ENCODE measurements at regions of chr14 and their contacts with region 1.

Region 1: GRCh38 chr14:61837336-61838229 is 75.4 kb downstream of the SNAPC1 start:
- DNase-seq: peak; percentile 39 to 86
- H3K4me3 ChIP-seq: no peak overlapping the region
- H3K27ac ChIP-seq: no peak overlapping the region
- H3K4me1 ChIP-seq: peaks cover 0 to 4% (median 2%) of the 10 kb centered on the region in 4 experiments; a peak in 4 of 7 replicates
- H3K27me3 ChIP-seq: no peaks in the 10 kb centered on the region; a peak in 1 of 7 replicates
- CTCF ChIP-seq: peak; percentile 91 to 96 (median 93)
- EP300 ChIP-seq: no peak
- POLR2A ChIP-seq: no peak
- RAD21 ChIP-seq: peak; percentile 97 to 98

Region 2: DNA sequence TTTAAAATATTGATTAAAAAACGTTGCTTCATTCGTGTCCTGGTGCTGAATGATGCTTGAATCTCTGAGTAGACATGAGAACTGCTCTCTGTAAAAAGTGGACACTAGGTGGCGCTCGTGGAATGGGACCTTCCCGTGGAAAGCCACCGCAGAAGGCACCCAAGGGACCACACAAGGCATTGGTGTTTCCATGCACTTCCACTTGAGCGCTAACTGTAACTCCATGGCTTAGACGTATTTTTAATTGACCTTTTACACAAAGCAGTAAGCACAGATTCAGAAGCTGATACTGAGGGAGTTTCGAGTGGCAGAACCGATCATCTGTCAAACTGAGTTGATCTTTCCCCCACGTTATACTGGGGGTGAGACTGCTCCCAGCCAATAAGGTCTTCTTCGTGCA is 380.9 kb before region 1 on chr14:
- CTCF ChIA-PET with region 1: interaction called, 40 read pairs
- POLR2A ChIA-PET with region 1: interaction called, 4 read pairs
- DNase-seq: peak in 1 of 2 experiments; percentile 85
- H3K4me3 ChIP-seq: no peak overlapping the region
- H3K27ac ChIP-seq: no peak overlapping the region
- H3K4me1 ChIP-seq: no peaks in the 10 kb centered on the region
- H3K27me3 ChIP-seq: no peaks in the 10 kb centered on the region
- CTCF ChIP-seq: peak; percentile 57 to 82 (median 71)
- EP300 ChIP-seq: no peak
- POLR2A ChIP-seq: no peak
- RAD21 ChIP-seq: peak; percentile 79 to 84

Region 3: GRCh38 chr14:61475316-61475715 is 362.3 kb before region 1 on chr14:
- CTCF ChIA-PET with region 1: interaction called, 29 read pairs
- POLR2A ChIA-PET with region 1: no interaction called
- DNase-seq: no peak
- H3K4me3 ChIP-seq: no peak overlapping the region
- H3K27ac ChIP-seq: no peak overlapping the region
- H3K4me1 ChIP-seq: peaks cover 0 to 10% (median 7%) of the 10 kb centered on the region in 4 experiments; a peak in 5 of 7 replicates
- H3K27me3 ChIP-seq: no peaks in the 10 kb centered on the region
- CTCF ChIP-seq: peak in 2 of 3 experiments; percentile 26 to 55; a peak in 2 of 4 replicates
- EP300 ChIP-seq: no peak
- POLR2A ChIP-seq: no peak
- RAD21 ChIP-seq: peak; percentile 63 to 71

Region 4: DNA sequence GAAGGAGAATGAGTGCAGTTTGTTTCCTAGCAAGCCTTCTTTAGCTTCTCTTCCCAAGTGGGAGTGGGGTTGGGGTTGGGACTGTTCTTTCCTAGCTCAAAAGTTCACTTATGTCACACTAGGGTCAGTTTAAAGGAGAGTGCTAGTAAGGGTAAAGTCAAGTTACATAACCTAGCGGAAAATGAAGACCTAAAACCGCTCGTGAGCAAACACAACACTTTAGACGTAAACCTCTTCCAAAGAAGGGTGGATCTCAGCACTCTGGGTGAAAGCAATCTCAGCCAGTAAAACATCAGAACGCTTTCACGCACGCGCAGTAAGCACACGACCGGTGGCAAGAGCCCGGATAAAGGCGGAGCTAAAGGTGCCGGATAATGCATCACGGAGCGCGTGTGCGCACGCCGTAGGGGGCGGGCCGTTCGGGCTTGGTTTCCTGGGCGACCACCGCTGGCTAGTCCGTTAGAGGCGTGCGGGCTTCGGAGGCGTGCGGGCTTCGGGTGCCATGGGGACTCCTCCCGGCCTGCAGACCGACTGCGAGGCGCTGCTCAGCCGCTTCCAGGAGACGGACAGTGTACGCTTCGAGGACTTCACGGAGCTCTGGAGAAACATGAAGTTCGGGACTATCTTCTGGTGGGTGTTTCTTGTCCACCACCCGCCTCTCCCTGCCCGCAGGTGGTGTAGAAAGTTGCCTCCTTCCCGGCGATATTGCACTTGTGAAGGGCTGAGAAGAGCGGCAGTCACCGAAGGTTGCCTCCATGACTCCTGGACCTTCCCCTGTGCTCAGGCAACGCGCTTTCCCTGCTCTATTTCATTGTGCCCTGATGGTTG is 75.4 kb before region 1 on chr14 and contains the start of gene SNAPC1:
- CTCF ChIA-PET with region 1: interaction called, 12 read pairs
- POLR2A ChIA-PET with region 1: no interaction called
- DNase-seq: peak; percentile 95 to 97
- H3K4me3 ChIP-seq: peak within 1 kb of the TSS; percentile 94 to 97 (median 96)
- H3K27ac ChIP-seq: peak within 1 kb of the TSS; percentile 83
- H3K4me1 ChIP-seq: peaks cover 0 to 9% (median 4%) of the 10 kb centered on the region in 4 experiments; a peak in 4 of 7 replicates
- H3K27me3 ChIP-seq: no peaks in the 10 kb centered on the region
- CTCF ChIP-seq: no peak
- EP300 ChIP-seq: no peak
- POLR2A ChIP-seq: peak; percentile 78 to 95
- RAD21 ChIP-seq: no peak
- total RNA-seq, gene SNAPC1: 9.6 and 11.1 TPM in 2 replicates

Region 5: DNA sequence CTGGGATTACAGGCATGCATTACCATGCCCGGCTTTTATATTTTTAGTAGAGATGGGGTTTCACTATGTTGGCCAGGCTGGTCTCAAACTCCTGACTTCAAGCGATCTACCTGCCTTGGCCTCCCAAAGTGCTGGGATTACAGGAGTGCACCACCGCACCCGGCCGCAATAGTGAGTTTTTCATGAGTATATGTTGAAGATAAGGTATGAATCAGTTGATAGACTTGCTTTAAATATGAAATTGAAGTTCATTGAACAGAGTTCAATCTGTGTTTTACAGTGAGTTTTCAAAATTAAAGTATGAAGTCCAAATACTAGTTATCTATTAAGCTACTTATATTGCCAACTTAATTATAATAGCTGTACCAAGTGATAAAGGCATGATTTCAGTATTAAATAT is 40.3 kb before region 1 on chr14:
- CTCF ChIA-PET with region 1: interaction called, 14 read pairs
- POLR2A ChIA-PET with region 1: no interaction called
- DNase-seq: no peak
- H3K4me3 ChIP-seq: no peak overlapping the region
- H3K27ac ChIP-seq: no peak overlapping the region
- H3K4me1 ChIP-seq: no peaks in the 10 kb centered on the region; a peak in 1 of 7 replicates
- H3K27me3 ChIP-seq: no peaks in the 10 kb centered on the region
- CTCF ChIP-seq: no peak
- EP300 ChIP-seq: no peak
- POLR2A ChIP-seq: no peak
- RAD21 ChIP-seq: no peak

Region 6: DNA sequence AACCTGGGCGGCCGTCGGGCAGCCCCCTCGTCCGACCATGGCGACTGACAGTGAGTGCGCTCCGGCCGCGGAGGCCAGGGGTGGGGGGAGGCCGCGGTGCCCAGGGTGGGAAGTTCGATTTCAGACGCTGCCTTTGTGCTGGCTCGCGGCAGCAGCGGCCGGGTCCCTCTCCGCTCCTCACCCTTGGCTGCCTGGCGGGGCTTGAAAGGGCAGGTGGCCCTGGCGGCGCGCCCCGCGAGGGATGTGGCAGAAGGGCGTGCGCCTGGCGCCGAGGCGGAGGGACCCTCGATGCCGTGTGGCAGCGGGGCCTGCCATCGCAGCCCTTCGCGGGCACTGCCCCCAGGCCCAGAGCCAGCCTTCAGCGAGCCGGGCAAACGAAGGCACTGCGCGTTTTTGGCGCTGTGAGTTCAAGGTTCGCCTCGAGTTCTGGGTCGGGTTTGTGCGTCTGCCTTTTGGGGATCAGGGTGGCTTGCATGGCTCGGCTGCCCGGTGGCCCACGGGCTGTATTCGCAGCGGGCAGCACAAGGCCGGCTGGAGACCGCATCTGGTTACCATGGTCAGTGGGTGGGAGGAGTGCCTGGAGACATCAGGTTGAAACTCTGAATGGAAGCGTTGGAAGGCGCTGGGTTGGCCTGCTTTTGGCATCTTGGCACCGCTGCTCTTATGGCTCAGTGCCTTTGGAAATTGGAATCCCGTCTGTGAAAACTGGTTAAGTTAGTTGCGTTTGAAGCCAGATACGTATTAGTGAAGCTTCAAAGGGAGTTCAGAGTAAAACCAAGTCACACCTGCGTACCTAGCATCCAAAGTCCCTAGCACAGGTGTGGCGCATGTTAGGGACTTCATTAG is 24.6 kb before region 1 on chr14:
- CTCF ChIA-PET with region 1: interaction called, 20 read pairs
- POLR2A ChIA-PET with region 1: no interaction called
- DNase-seq: peak in 1 of 2 experiments; percentile 76
- H3K4me3 ChIP-seq: peak overlapping the region; percentile 56 to 73 (median 64)
- H3K27ac ChIP-seq: no peak overlapping the region
- H3K4me1 ChIP-seq: peaks cover 0 to 6% (median 4%) of the 10 kb centered on the region in 4 experiments; a peak in 5 of 7 replicates
- H3K27me3 ChIP-seq: peaks cover 4 to 33% (median 23%) of the 10 kb centered on the region in 4 experiments
- CTCF ChIP-seq: no peak
- EP300 ChIP-seq: no peak
- POLR2A ChIP-seq: no peak
- RAD21 ChIP-seq: no peak

Region 7: DNA sequence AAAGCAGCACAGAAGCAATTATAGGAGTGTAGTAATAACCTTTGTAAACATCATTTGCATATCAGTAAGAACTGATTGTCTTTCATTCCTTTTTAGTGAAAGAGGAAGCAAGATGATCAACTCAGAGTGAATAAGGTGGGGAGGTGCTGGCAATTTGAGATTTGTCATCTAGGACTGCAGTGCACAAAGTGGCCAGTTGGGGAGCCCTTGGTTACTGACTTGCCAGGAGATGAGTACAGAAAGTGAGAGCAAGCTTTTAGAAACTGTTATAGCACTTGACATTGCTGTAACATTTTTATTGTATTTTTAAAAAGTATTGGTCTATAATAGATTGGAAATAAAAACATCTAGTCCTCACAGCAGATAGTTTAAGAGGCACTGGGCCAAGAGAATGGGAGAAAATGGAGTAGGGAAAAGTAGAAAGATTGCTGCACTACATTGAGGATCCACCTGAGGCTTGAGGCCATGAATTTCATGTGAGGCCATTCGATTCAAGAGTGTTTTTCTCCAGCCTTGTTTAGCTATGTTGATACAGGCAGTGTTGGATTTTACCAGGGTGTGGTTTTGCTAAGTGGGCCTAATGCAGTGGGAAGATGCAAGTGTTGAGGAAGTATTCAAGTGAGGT is 22.8 kb after region 1 on chr14:
- CTCF ChIA-PET with region 1: interaction called, 13 read pairs
- POLR2A ChIA-PET with region 1: no interaction called
- DNase-seq: peak in 1 of 2 experiments; percentile 82
- H3K4me3 ChIP-seq: no peak overlapping the region
- H3K27ac ChIP-seq: no peak overlapping the region
- H3K4me1 ChIP-seq: no peaks in the 10 kb centered on the region
- H3K27me3 ChIP-seq: no peaks in the 10 kb centered on the region
- CTCF ChIP-seq: peak; percentile 55 to 68 (median 57)
- EP300 ChIP-seq: no peak
- POLR2A ChIP-seq: no peak
- RAD21 ChIP-seq: peak; percentile 57 to 62

Region 8: DNA sequence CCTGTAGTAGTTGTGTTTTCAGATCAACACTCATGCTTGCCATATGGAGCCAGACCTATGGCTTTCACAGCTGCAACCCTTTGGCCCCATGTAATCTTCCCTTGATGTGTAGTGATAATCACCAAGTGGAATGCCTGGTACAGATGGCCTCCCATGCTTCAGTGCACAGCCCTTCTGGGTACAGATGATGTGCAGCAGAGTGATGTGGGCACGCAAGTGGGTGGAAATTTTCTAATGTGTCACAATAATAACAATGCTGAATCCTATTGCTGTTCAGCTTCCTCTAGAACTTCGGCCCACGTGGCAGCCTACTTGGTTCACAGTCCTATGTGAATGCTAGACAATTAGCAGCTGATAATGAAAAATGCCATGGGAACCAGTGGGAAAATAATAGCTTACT is 112.8 kb after region 1 on chr14:
- CTCF ChIA-PET with region 1: no interaction called
- POLR2A ChIA-PET with region 1: no interaction called
- DNase-seq: no peak
- H3K4me3 ChIP-seq: no peak overlapping the region
- H3K27ac ChIP-seq: no peak overlapping the region
- H3K4me1 ChIP-seq: no peaks in the 10 kb centered on the region
- H3K27me3 ChIP-seq: no peaks in the 10 kb centered on the region
- CTCF ChIP-seq: no peak
- EP300 ChIP-seq: no peak
- POLR2A ChIP-seq: no peak
- RAD21 ChIP-seq: no peak

Measured in H1 (cell line).